CD8-positive, alpha-beta memory T cell (primary cell): ENCODE measurements at regions of chr9 and their contacts with region 1.

Region 1: DNA sequence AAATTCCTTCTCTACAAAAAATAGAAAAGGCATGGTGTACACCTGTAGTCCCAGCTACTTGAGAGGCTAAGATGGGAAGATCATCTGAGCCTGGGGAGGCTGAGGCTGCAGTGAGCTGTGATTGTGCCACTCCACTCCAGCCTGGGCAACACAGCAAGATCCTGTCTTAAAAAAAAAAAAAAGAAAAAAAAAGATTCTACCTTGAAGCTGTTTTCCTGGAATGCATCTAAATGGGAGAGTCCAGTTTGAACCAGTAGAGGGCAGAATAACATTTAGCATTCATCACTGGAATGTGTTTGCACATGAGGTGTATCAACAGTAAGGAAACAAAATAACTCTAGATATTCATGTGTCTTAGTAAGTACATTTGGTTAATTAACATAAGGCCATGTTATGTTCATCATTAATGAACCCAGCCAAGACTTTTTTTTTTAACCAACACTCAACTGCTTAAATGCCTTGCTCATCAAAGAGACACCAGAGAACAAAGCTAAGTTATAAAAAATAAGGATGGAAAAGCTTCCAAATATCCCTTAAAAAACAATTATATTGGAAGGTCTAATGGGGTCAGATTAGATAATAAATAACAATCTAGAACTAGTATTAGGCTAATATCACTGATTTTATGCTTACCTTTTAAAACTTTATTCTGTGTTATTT is 16.1 kb downstream of the IFNE start:
- DNase-seq: peak in 2 of 5 donors; percentile 40 to 52
- H3K4me3 ChIP-seq: no peak overlapping the region
- H3K4me3 Mint-ChIP-seq: no peak overlapping the region
- H3K27ac ChIP-seq: no peak overlapping the region
- H3K27ac Mint-ChIP-seq: no peak overlapping the region
- H3K4me1 ChIP-seq: no peaks in the 10 kb centered on the region
- H3K4me1 Mint-ChIP-seq: peaks cover 2 to 4% (median 3%) of the 10 kb centered on the region in 3 donors
- H3K27me3 ChIP-seq: no peaks in the 10 kb centered on the region
- H3K27me3 Mint-ChIP-seq: peaks cover 16 to 32% of the 10 kb centered on the region in 2 donors

Region 2: DNA sequence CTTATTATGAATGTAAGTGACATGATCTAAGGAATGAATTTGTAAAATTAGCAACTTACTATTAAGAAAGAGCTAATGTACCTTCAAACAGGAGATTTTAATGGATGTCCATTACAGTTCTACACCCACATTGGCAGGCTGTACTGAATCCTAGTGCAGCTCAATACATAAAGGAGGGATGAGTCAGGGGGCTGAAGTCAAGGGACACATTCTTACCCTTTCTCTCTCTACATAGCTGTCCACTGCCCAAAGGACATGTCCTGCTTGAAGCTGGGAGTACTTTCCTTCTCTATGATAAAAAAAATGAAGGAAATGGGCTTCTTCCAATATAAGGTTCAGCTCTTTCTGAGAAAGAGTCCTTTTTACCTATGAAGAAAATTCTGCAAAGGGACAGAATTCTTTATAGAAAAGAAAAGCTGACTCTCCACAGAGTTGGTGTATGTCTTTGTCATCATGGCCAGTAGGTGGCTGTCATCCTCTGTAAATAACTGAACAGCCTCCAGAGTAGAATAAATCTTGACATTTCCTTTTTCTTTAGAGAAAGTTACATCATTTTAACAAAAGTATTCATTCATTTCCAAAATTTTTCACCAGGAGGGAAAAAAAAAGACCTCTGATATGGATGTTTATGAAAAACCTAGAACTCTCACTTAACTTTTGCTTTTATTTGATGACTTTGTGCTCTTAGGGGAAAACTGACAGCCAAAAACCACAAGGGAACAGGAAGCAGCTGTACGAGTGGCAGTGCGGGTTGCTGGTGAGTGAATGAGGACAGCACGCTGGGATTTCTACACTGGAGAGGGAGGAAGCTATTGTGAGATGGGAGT is 213.1 kb before region 1 on chr9:
- CTCF ChIA-PET with region 1: no interaction called
- POLR2A ChIA-PET with region 1: no interaction called
- DNase-seq: peak in 2 of 5 donors; percentile 7 to 8
- H3K4me3 ChIP-seq: no peak overlapping the region
- H3K4me3 Mint-ChIP-seq: peak overlapping the region in 2 of 7 donors; percentile 2 to 37
- H3K27ac ChIP-seq: no peak overlapping the region
- H3K27ac Mint-ChIP-seq: no peak overlapping the region
- H3K4me1 ChIP-seq: peaks cover 4% of the 10 kb centered on the region
- H3K4me1 Mint-ChIP-seq: peaks cover 6 to 7% (median 7%) of the 10 kb centered on the region in 3 donors
- H3K27me3 ChIP-seq: no peaks in the 10 kb centered on the region
- H3K27me3 Mint-ChIP-seq: peaks cover 8 to 45% of the 10 kb centered on the region in 2 donors

Region 3: GRCh38 chr9:21455320-21455719 is 10.7 kb before region 1 on chr9:
- CTCF ChIA-PET with region 1: interaction called, 10 read pairs
- POLR2A ChIA-PET with region 1: no interaction called
- DNase-seq: peak in 2 of 5 donors; percentile 25 to 26
- H3K4me3 ChIP-seq: no peak overlapping the region
- H3K4me3 Mint-ChIP-seq: no peak overlapping the region
- H3K27ac ChIP-seq: no peak overlapping the region
- H3K27ac Mint-ChIP-seq: peak overlapping the region in 1 of 8 donors; percentile 24
- H3K4me1 ChIP-seq: no peaks in the 10 kb centered on the region
- H3K4me1 Mint-ChIP-seq: no peaks in the 10 kb centered on the region
- H3K27me3 ChIP-seq: no peaks in the 10 kb centered on the region
- H3K27me3 Mint-ChIP-seq: peaks cover 14 to 36% of the 10 kb centered on the region in 2 donors

Region 4: DNA sequence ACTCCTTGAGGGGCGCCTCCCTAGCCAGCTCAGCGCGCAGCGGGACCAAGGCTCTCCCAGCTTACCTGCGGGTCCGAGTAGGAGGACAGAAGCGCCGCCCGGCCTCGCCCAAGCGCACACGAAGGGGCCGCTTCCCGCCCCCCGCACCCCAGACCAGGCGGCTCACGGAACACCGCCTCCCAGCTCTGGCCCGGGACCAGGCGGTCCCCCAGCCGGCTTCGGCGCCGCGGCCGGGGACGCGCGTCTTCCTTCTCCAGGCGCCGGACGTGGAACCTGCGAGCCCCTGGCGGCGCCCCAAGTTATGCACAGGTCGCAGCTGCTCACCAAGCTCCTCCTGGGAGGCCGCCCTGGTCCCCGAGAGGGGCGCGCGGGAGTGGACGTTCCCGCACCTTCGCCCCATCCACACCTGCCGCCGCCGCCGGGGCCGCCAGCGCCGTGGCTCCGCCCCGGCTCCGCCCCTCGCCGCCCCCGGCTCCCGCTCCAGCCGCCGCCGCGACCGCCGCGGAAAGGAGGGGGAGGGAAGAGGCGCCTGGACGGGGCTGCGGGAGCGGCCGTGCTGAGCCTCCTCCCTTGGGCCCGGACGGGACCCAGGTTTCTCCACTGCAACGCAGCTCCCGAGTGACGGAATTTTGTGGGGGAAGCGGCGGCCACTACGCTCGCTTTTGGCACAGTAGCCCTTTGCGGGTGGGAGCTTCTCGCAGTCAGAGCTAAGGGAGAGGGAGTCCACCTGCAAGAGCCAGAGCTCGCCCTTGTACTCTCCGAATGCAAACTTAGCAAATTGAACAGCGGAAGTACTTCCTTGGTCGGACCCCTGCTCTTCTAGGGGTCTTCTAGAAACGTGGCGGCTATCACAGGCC is 93.7 kb after region 1 on chr9:
- CTCF ChIA-PET with region 1: interaction called, 18 read pairs
- POLR2A ChIA-PET with region 1: no interaction called
- DNase-seq: peak; percentile 24 to 73 (median 54)
- H3K4me3 ChIP-seq: peak overlapping the region; percentile 52
- H3K4me3 Mint-ChIP-seq: peak overlapping the region; percentile 51 to 94 (median 91)
- H3K27ac ChIP-seq: no peak overlapping the region
- H3K27ac Mint-ChIP-seq: peak overlapping the region in 1 of 8 donors; percentile 61
- H3K4me1 ChIP-seq: peaks cover 22% of the 10 kb centered on the region
- H3K4me1 Mint-ChIP-seq: peaks cover 23 to 50% (median 24%) of the 10 kb centered on the region in 3 donors
- H3K27me3 ChIP-seq: peaks cover 34% of the 10 kb centered on the region
- H3K27me3 Mint-ChIP-seq: peaks cover 36 to 55% of the 10 kb centered on the region in 2 donors

Region 5: GRCh38 chr9:21709464-21710058 is 243.6 kb after region 1 on chr9:
- CTCF ChIA-PET with region 1: interaction called, 26 read pairs
- POLR2A ChIA-PET with region 1: no interaction called
- DNase-seq: peak; percentile 31 to 66 (median 41)
- H3K4me3 ChIP-seq: no peak overlapping the region
- H3K4me3 Mint-ChIP-seq: no peak overlapping the region
- H3K27ac ChIP-seq: no peak overlapping the region
- H3K27ac Mint-ChIP-seq: peak overlapping the region in 1 of 8 donors; percentile 62
- H3K4me1 ChIP-seq: no peaks in the 10 kb centered on the region
- H3K4me1 Mint-ChIP-seq: peaks cover 0 to 23% (median 3%) of the 10 kb centered on the region in 3 donors
- H3K27me3 ChIP-seq: no peaks in the 10 kb centered on the region
- H3K27me3 Mint-ChIP-seq: peaks cover 5 to 9% of the 10 kb centered on the region in 2 donors

Region 6: GRCh38 chr9:21789541-21790037 is 323.6 kb after region 1 on chr9:
- CTCF ChIA-PET with region 1: interaction called, 28 read pairs
- POLR2A ChIA-PET with region 1: no interaction called
- DNase-seq: peak in 4 of 5 donors; percentile 29 to 73 (median 66)
- H3K4me3 ChIP-seq: peak overlapping the region; percentile 59
- H3K4me3 Mint-ChIP-seq: peak overlapping the region in 6 of 7 donors; percentile 66 to 82 (median 77)
- H3K27ac ChIP-seq: no peak overlapping the region
- H3K27ac Mint-ChIP-seq: peak overlapping the region in 1 of 8 donors; percentile 46
- H3K4me1 ChIP-seq: no peaks in the 10 kb centered on the region
- H3K4me1 Mint-ChIP-seq: peaks cover 0 to 5% (median 0%) of the 10 kb centered on the region in 3 donors
- H3K27me3 ChIP-seq: peaks cover 9% of the 10 kb centered on the region
- H3K27me3 Mint-ChIP-seq: peaks cover 6 to 12% of the 10 kb centered on the region in 2 donors